OCI-LY7 (cell line): ENCODE measurements at regions of chr3 and their contacts with region 1.

Region 1: DNA sequence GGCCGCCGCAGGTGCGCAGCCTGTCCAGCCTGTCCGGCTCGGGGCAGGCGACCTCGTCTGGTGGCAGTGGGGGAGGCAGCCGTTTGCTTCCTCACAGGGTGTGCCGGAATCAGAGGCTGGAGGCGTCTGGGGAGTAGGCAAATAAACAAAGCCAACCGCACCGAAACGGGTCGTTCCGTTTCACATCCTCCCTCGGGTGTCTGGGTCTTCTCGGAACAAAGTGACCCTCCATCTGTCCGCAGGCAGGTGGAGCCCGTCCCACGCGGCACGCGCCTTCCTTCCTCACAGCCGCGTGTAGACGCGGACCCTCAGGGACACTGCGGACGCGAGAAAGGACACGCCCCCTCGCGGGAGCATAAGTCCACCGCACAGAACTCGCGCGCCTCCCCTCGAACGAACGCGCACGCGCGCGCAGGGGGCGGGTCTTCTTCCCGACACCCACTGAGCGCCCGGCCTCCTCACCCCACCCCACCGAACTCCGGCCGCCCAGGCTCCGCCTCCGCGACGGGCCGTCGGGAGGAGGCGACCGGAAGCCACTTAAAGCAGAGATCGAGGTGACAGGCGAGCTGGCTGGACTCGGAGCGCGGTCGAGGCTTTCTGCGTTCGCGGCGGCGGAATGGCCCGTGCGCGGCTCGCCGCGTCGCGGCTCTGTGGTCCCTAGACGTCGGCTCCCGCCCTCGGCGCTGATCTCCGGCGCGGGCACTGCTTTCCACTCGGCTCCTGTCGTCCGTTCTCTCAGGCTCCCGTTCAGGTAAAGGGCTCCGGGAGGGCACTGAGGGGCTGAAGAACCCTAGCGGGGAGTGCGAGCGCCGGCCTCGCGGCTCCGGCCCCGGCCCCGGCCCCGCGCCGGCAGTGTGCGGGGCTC is at the start of gene TIPARP:
- DNase-seq: peak; percentile 97
- H3K4me3 ChIP-seq: peak within 1 kb of the TSS; percentile 96
- H3K27ac ChIP-seq: peak within 1 kb of the TSS; percentile 77
- H3K4me1 ChIP-seq: peaks cover 39% of the 10 kb centered on the region
- CTCF ChIP-seq: peak; percentile 79
- total RNA-seq, gene TIPARP: 9.7 and 10.0 TPM in 2 replicates

Region 2: DNA sequence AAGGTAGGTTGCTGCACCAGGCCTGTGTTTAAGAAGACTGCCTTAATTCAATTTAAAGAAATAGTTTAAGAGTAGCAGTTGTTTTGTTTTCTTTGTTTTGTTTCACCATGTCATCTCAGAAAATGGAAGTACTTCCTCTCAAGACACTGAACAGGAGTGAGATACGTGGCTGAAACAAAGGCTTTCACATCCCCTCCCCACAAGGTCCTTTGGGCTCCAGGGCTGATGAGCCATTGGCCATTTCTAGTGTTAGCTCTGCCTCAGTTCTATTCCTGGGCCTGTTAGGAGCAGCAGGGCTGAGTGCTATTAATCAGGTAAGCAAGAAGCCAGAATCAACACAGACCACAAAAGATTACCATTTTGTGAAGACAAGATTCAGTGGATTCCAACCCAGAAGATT is 421.1 kb before region 1 on chr3:
- CTCF ChIA-PET with region 1: no interaction called
- POLR2A ChIA-PET with region 1: no interaction called
- intact Hi-C with region 1: no loop called
- DNase-seq: no peak
- H3K4me3 ChIP-seq: no peak overlapping the region
- H3K27ac ChIP-seq: no peak overlapping the region
- H3K4me1 ChIP-seq: no peaks in the 10 kb centered on the region
- CTCF ChIP-seq: no peak

Region 3: DNA sequence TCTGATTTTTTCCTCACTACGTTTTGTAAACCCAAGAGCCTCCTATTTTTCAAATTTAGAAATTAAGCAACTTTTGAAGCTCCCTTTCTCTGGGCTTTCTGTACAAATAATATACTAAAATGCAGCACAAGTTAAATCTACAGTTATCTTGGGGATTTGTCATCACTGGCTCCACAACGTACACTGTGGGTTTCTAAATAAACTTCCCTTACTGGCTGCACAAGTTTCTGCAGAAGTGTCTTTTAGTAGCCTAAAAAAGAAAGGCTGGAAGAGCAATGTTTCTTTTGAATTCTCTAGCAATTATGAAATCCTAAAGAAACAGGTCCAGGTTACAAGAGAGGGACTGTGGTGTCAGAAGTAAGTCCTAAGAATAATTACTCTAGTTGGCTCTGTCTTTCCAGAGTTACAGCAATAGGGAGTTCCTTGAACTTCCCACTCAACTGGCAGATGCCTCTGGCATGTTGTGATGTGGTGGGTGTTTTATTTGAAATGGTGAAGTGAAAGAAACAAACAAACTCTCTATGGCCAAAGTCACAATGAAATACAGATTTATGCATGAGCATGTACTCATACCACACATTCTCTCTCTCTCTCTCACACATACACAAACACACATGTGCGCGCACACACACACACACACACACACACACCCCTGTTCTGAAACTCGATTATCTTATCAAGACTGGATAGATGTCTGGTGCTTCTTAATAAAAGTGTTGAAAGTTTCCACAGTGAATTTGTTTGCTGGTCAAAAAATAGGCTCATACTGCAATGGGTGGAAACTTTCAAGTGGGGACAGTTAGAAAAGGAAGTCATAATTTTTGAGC is 317.5 kb before region 1 on chr3:
- CTCF ChIA-PET with region 1: no interaction called
- POLR2A ChIA-PET with region 1: no interaction called
- intact Hi-C with region 1: no loop called
- DNase-seq: no peak
- H3K4me3 ChIP-seq: no peak overlapping the region
- H3K27ac ChIP-seq: no peak overlapping the region
- H3K4me1 ChIP-seq: no peaks in the 10 kb centered on the region
- CTCF ChIP-seq: no peak

Region 4: DNA sequence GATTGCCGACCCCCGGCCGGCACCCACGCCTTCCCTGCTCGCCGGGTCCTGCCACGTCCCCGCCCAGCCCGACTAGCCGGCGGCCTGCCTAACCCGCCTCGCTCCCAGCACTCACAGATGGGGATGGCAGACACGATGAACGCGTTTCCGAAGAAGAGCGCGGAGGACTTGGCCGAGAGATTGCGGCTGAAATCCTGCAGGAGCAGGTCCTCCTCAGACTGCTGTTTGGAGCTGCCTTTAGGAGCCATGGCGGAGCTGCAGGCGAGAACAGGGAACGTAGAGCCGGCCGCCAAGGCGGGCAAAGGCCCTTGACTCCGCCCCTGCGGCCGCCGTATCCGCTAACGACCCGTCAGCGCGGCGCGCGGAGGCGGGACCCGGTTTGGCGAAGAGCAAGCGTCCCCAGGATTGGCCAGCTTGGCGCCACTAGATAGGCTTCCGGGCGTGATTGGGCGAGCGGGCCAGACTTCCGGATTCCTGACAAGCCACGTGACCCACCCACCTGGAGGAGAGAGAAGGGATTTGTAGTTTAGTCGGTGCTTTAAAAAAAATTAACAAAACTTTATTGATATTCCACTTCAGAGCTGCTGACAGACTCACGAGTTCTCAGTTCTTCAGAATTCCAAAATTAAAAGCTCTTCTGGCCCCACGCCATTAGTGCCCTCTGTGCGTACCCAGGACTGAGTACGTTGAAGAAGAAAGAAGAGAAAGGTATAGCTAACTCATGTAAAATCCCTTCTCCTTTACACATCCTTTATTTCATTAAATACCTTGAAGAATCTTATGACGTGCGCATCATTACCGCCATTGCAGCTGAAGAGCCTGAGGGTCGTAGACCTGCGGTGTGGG is 119.2 kb before region 1 on chr3 and contains the start of gene SSR3:
- CTCF ChIA-PET with region 1: interaction called, 7 read pairs
- POLR2A ChIA-PET with region 1: interaction called, 16 read pairs
- intact Hi-C with region 1: loop called (anchors 1 kb)
- DNase-seq: peak; percentile 99
- H3K4me3 ChIP-seq: peak within 1 kb of the TSS; percentile 96
- H3K27ac ChIP-seq: peak within 1 kb of the TSS; percentile 28
- H3K4me1 ChIP-seq: peaks cover 11% of the 10 kb centered on the region
- CTCF ChIP-seq: no peak
- total RNA-seq, gene SSR3: 61.2 and 63.3 TPM in 2 replicates

Region 5: DNA sequence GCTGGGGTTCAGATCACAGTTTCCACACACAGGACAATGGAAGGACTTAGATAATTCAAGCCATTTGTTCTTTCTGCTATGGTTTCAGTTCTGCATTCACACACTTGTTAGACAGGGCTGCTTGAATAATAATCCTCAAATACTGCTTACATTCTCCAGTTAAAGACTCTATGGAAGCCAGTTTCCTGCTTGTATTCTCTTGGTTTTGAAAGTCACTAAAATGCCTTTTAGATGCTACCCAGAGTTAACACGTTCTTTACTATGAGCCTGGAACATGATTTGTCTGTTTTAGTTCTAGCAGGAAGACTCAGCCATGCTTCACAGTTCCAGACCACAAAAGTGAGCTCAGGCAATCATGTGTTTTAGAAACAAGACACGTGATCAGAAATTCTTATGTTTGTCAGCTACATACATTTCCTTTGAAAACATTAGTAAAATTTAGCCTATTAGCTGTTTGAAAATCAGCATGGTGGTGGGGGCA is 304.2 kb after region 1 on chr3:
- CTCF ChIA-PET with region 1: no interaction called
- POLR2A ChIA-PET with region 1: interaction called, 3 read pairs
- intact Hi-C with region 1: loop called (anchors 5 kb)
- DNase-seq: peak; percentile 85
- H3K4me3 ChIP-seq: peak overlapping the region; percentile 30
- H3K27ac ChIP-seq: peak overlapping the region; percentile 60
- H3K4me1 ChIP-seq: peaks cover 21% of the 10 kb centered on the region
- CTCF ChIP-seq: no peak

Region 6: DNA sequence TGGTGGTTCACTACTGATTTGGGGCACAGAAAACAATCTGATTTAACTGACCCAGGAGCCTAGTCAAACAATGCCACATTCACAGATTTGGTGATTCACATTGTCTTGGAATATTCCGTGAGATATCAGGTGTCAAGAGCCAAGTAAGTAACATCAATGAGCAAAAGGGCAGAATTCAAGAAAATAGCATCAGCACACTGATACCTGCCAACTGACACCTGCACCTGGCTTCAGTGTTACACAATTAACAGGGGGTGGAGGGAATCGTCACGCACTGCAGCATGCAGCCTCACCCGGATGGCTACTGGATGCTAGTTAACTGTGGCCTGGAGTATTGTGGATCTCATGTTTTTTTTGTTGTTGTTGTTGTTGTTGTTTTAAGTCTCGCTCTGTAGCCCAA is 468.0 kb after region 1 on chr3:
- CTCF ChIA-PET with region 1: no interaction called
- POLR2A ChIA-PET with region 1: no interaction called
- intact Hi-C with region 1: loop called (anchors 5 kb)
- DNase-seq: peak; percentile 80
- H3K4me3 ChIP-seq: no peak overlapping the region
- H3K27ac ChIP-seq: peak overlapping the region; percentile 82
- H3K4me1 ChIP-seq: peaks cover 39% of the 10 kb centered on the region
- CTCF ChIP-seq: no peak

Region 7: DNA sequence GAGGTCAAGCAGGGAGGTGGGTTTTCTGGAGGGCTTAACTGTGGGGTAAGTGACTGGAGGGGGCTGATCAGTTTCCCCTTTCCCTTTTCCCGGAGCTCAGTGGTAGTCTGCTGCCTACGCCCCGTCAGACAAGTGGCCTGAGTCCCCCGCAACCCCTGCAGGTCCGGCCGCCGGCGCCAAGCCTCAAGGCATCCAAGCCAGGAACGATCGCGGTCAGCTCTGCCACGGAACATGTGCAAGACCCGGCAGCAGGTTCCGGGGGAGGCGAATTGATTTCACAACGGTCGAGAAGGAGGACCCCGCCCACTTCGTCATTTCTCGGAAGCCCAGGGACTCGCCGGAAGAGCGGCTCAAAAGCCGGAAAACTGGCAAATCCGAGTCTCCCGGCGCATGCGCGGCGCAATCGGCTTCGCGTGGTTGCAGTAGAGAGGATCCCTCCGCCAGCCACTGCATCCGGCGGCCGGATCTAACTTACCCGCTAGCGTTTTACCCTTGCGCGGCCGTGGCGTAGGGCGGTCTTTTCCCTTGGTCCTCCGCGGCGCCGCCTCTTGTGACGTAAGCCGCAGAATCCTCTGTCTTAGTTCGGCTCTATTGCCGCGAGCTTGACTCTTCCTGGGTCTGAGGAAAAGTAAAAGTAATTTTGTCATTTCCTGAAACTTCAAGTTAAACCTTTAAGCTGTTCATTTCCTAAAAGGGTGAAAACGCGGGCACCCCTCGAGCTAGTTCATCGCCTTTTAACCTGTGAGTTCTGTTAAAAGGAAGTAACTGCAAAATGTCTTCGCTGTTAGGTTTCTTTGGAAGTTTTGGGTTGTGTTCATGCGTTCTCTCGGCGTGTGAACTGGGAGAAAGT is 500.6 kb after region 1 on chr3:
- CTCF ChIA-PET with region 1: no interaction called
- POLR2A ChIA-PET with region 1: interaction called, 5 read pairs
- intact Hi-C with region 1: loop called (anchors 2 kb)
- DNase-seq: peak; percentile 100
- H3K4me3 ChIP-seq: peak overlapping the region; percentile 88
- H3K27ac ChIP-seq: peak overlapping the region; percentile 86
- H3K4me1 ChIP-seq: peaks cover 26% of the 10 kb centered on the region
- CTCF ChIP-seq: no peak

Region 8: GRCh38 chr3:157190388-157190872 is 516.2 kb after region 1 on chr3:
- CTCF ChIA-PET with region 1: no interaction called
- POLR2A ChIA-PET with region 1: no interaction called
- intact Hi-C with region 1: no loop called
- DNase-seq: no peak
- H3K4me3 ChIP-seq: no peak overlapping the region
- H3K27ac ChIP-seq: no peak overlapping the region
- H3K4me1 ChIP-seq: no peaks in the 10 kb centered on the region
- CTCF ChIP-seq: no peak

Region 9: GRCh38 chr3:157718800-157719199 is 1044.5 kb after region 1 on chr3:
- CTCF ChIA-PET with region 1: no interaction called
- POLR2A ChIA-PET with region 1: no interaction called
- intact Hi-C with region 1: no loop called
- DNase-seq: no peak
- H3K4me3 ChIP-seq: no peak overlapping the region
- H3K27ac ChIP-seq: no peak overlapping the region
- H3K4me1 ChIP-seq: no peaks in the 10 kb centered on the region
- CTCF ChIP-seq: no peak